CD8-positive, alpha-beta T cell (primary cell): ENCODE measurements at regions of chr6 and their contacts with region 1.

Region 1: GRCh38 chr6:16391451-16391912 is 153.1 kb downstream of the GMPR start:
- DNase-seq: no peak
- ATAC-seq: no peak
- H3K4me3 ChIP-seq: no peak overlapping the region
- H3K4me3 Mint-ChIP-seq: no peak overlapping the region
- H3K27ac ChIP-seq: no peak overlapping the region
- H3K27ac Mint-ChIP-seq: no peak overlapping the region
- H3K4me1 ChIP-seq: no peaks in the 10 kb centered on the region
- H3K4me1 Mint-ChIP-seq: peaks cover under 1% of the 10 kb centered on the region
- H3K27me3 ChIP-seq: no peaks in the 10 kb centered on the region
- H3K27me3 Mint-ChIP-seq: no peaks in the 10 kb centered on the region
- CTCF ChIP-seq: no peak

Region 2: GRCh38 chr6:16352258-16352635 is 39.2 kb before region 1 on chr6:
- CTCF ChIA-PET with region 1: no interaction called
- POLR2A ChIA-PET with region 1: interaction called, 3 read pairs
- intact Hi-C with region 1: loop called in 1 of 2 experiments (anchors 5 kb)
- DNase-seq: no peak
- ATAC-seq: no peak
- H3K4me3 ChIP-seq: no peak overlapping the region
- H3K4me3 Mint-ChIP-seq: no peak overlapping the region
- H3K27ac ChIP-seq: no peak overlapping the region
- H3K27ac Mint-ChIP-seq: no peak overlapping the region
- H3K4me1 ChIP-seq: no peaks in the 10 kb centered on the region
- H3K4me1 Mint-ChIP-seq: no peaks in the 10 kb centered on the region
- H3K27me3 ChIP-seq: no peaks in the 10 kb centered on the region
- H3K27me3 Mint-ChIP-seq: no peaks in the 10 kb centered on the region
- CTCF ChIP-seq: no peak